Endothelial cell of umbilical vein (primary cell): ENCODE measurements at regions of chr6 and their contacts with region 1.

Region 1: DNA sequence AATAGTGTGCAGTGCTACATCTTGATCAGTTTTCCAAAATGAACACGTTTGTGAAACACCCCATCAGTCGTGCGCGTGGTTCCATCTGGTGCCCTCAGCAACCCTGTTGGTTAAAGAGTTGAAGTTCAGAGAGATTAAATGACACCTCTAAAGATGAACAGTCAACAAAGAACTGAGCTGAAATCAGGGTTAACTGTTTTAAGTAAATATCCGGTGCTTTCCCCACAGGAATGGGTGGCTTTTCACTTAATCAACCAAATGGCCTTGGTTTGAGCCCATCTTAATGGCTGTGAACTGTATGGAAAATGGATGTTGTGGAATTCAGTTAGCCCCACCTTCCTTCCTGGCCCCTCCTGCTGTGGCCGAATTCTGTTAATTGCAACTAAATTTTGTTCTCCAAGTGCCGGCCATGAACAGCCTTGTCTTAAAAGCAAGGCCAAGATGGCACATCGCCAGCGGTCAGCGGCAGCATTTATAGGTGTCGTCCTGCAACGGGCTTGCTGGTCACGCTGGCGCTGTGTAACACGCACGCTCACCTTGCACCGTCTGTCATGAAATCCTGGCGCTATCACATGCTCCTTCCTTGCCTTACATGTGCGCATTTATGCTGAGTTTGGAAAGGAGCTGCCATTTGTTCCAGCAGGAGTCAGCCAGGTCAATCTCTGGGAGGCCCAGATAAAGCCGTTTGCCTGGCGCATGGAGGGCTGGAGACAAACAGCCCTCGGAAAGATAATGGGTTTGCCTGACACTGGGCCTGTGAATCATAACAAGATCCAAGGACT is 164.5 kb downstream of the ERMARD start:
- DNase-seq: peak; percentile 98
- H3K4me3 ChIP-seq: no peak overlapping the region
- H3K27ac ChIP-seq: no peak overlapping the region
- H3K4me1 ChIP-seq: peaks cover 12% of the 10 kb centered on the region
- H3K27me3 ChIP-seq: peaks cover 2 to 4% of the 10 kb centered on the region in 2 experiments
- CTCF ChIP-seq: no peak
- POLR2A ChIP-seq: no peak

Region 2: GRCh38 chr6:169905041-169905807 is 10.7 kb before region 1 on chr6:
- CTCF ChIA-PET with region 1: interaction called, 8 read pairs
- POLR2A ChIA-PET with region 1: no interaction called
- dilution Hi-C with region 1: no loop called
- intact Hi-C with region 1: loop called (anchors 1 kb)
- DNase-seq: peak; percentile 99
- H3K4me3 ChIP-seq: no peak overlapping the region
- H3K27ac ChIP-seq: peak overlapping the region; percentile 75
- H3K4me1 ChIP-seq: peaks cover 28% of the 10 kb centered on the region
- H3K27me3 ChIP-seq: no peaks in the 10 kb centered on the region
- CTCF ChIP-seq: no peak
- POLR2A ChIP-seq: peak; percentile 74